Dendritic cell treated with granulocyte-macrophage colony-stimulating factor and Interleukin-4, amounts not matched to agents 40 ng/mL and 50 ng/mL, for 4 days (primary cell): ENCODE measurements at regions of chr3 and their contacts with region 1.

Region 1: DNA sequence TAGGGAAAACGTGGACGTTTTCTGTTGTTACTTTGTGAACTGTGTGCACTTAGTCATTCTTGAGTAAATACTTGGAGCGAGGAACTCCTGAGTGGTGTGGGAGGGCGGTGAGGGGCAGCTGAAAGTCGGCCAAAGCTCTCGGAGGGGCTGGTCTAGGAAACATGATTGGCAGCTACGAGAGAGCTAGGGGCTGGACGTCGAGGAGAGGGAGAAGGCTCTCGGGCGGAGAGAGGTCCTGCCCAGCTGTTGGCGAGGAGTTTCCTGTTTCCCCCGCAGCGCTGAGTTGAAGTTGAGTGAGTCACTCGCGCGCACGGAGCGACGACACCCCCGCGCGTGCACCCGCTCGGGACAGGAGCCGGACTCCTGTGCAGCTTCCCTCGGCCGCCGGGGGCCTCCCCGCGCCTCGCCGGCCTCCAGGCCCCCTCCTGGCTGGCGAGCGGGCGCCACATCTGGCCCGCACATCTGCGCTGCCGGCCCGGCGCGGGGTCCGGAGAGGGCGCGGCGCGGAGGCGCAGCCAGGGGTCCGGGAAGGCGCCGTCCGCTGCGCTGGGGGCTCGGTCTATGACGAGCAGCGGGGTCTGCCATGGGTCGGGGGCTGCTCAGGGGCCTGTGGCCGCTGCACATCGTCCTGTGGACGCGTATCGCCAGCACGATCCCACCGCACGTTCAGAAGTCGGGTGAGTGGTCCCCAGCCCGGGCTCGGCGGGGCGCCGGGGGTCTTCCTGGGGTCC is at the start of gene TGFBR2:
- H3K4me3 Mint-ChIP-seq: peak within 1 kb of the TSS; percentile 95
- H3K27ac Mint-ChIP-seq: peak within 1 kb of the TSS; percentile 92
- H3K4me1 Mint-ChIP-seq: peaks cover 59% of the 10 kb centered on the region
- H3K27me3 Mint-ChIP-seq: no peaks in the 10 kb centered on the region

Region 2: DNA sequence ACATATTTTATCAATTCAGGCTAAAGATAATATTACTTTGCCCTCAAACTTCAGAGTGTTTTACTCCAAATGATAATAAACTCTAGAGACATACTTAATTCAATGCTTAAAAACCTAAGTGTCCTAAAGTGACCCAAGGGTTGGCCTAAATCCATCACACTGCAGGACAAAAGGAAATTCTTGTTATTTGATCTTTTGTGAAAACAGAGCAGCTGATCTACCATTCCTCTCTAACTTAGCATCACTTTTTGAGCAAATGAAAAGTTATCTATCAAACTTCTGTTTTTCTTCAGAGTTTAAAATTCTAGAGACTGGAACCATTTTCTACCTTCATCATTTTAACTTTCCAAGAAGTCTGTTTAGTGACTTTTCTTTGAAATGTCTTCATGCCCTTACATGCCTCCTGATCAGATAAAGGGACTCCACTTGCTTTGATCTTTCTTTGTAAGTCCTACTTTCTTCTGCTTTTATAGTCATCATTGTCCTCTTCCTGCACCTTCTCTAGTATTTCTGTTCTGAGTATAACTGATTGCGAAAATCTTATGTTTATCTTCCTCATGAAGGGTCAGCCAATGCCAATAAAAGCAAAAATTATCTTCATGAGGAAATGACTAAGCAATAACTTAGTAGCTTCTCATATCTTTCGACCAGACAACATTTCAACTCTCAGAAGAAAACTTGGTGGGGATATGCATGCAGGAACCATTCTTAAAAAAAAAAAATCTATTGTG is 378.7 kb before region 1 on chr3:
- intact Hi-C with region 1: loop called (anchors 10 kb)
- H3K4me3 Mint-ChIP-seq: no peak overlapping the region
- H3K27ac Mint-ChIP-seq: peak overlapping the region; percentile 26
- H3K4me1 Mint-ChIP-seq: peaks cover 37% of the 10 kb centered on the region
- H3K27me3 Mint-ChIP-seq: no peaks in the 10 kb centered on the region

Region 3: GRCh38 chr3:30496066-30496966 is 110.2 kb before region 1 on chr3:
- intact Hi-C with region 1: loop called (anchors 10 kb)
- H3K4me3 Mint-ChIP-seq: no peak overlapping the region
- H3K27ac Mint-ChIP-seq: peak overlapping the region; percentile 80
- H3K4me1 Mint-ChIP-seq: peaks cover 62% of the 10 kb centered on the region
- H3K27me3 Mint-ChIP-seq: no peaks in the 10 kb centered on the region

Region 4: DNA sequence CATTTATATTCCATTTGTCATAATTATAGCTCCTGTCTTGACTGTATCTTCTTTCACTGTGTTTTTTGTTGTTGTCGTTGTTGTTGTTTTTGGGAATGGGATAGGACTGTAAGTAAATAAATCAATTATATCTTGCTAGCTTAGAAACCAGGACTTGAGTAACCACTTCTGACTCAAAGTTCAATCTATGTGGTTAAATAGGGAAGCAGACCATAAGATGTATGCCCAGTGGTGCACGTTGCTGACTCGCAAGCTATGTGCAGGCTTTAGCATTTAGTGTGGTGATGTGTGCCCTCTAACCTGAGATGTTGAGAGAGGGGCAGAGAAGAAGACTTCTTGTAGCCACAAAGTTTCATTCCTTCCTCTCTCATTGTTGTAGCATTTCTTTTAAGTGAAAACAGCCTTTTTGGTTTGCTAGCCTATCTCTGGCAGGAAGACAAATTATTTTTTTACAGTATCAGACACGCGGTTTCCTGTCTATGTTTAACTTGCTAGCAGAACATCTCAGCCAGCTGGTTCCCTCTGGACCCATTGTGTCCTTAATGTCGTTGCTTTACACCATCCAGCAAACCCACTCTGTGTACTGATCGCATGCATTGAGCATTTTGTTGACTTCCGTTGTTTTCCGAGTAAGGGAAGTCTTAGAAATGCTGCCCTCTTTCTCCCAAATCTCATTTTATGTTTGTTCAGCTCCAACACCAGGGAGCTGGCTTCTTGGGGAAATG is 52.0 kb after region 1 on chr3:
- intact Hi-C with region 1: loop called (anchors 2 kb)
- H3K4me3 Mint-ChIP-seq: peak overlapping the region; percentile 52
- H3K27ac Mint-ChIP-seq: peak overlapping the region; percentile 75
- H3K4me1 Mint-ChIP-seq: peaks cover 73% of the 10 kb centered on the region
- H3K27me3 Mint-ChIP-seq: no peaks in the 10 kb centered on the region

Region 5: DNA sequence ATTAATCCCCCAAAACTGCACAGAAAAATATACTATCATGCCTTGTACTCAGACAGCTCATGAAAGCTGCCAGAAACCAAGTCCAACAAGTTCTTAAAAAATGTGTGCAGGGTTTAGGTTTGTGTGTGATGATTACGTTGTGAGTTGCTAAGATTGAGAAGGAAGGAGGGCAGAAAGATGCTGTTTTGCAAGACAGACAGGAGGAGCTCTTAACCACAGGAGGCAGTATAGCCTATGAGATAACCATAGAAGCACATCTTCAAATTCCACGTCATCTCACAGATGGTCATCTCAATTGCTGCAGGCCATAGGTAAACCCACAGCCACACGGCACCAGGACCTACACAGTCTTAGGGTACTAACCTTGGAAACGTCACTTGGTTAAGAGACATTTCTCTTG is 1118.2 kb after region 1 on chr3:
- intact Hi-C with region 1: no loop called
- H3K4me3 Mint-ChIP-seq: no peak overlapping the region
- H3K27ac Mint-ChIP-seq: no peak overlapping the region
- H3K4me1 Mint-ChIP-seq: peaks cover 6% of the 10 kb centered on the region
- H3K27me3 Mint-ChIP-seq: peaks cover 3% of the 10 kb centered on the region